Calu3 (cell line): ENCODE measurements at regions of chr4 and their contacts with region 1.

Region 1: DNA sequence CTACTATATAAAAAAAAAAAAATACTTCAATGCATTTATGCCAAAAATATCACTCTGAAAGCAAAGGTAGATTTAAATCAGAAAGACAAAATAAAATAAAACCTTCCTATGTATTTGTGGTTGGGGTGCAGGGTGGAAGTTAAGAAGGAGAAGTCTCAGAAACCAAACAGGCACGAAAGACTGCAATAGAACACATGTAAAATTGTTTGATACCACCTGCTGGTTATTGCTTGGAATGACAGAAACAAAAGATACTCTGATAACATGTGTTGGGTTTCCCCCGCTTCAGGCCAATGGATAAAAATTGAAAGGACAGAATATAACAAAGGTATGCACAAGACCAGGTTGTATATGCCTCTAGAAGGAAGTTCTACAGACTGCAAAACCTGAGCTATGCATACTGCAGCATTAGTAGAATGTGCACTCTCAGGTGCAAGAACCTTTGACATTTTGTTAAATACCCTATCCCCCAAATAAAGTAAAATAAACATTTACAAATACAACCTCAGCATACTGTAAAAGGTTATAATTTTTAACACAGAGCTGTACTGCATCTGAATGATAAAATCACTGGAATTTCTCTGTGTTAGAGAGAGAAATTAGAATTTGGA is 118.8 kb downstream of the GABRA2 start:
- DNase-seq: no peak
- H3K4me3 Mint-ChIP-seq: no peak overlapping the region
- H3K27ac Mint-ChIP-seq: no peak overlapping the region
- H3K4me1 Mint-ChIP-seq: no peaks in the 10 kb centered on the region
- H3K27me3 Mint-ChIP-seq: no peaks in the 10 kb centered on the region
- CTCF ChIP-seq: no peak

Region 2: GRCh38 chr4:44760142-44760898 is 1510.8 kb before region 1 on chr4:
- CTCF ChIA-PET with region 1: no interaction called
- intact Hi-C with region 1: loop called (anchors 2 kb)
- DNase-seq: peak; percentile 9
- H3K4me3 Mint-ChIP-seq: no peak overlapping the region
- H3K27ac Mint-ChIP-seq: no peak overlapping the region
- H3K4me1 Mint-ChIP-seq: no peaks in the 10 kb centered on the region
- H3K27me3 Mint-ChIP-seq: no peaks in the 10 kb centered on the region
- CTCF ChIP-seq: peak; percentile 24

Region 3: GRCh38 chr4:44927399-44928380 is 1343.4 kb before region 1 on chr4:
- CTCF ChIA-PET with region 1: no interaction called
- intact Hi-C with region 1: loop called (anchors 2 kb)
- DNase-seq: peak; percentile 3
- H3K4me3 Mint-ChIP-seq: no peak overlapping the region
- H3K27ac Mint-ChIP-seq: no peak overlapping the region
- H3K4me1 Mint-ChIP-seq: no peaks in the 10 kb centered on the region
- H3K27me3 Mint-ChIP-seq: no peaks in the 10 kb centered on the region
- CTCF ChIP-seq: peak; percentile 13

Region 4: DNA sequence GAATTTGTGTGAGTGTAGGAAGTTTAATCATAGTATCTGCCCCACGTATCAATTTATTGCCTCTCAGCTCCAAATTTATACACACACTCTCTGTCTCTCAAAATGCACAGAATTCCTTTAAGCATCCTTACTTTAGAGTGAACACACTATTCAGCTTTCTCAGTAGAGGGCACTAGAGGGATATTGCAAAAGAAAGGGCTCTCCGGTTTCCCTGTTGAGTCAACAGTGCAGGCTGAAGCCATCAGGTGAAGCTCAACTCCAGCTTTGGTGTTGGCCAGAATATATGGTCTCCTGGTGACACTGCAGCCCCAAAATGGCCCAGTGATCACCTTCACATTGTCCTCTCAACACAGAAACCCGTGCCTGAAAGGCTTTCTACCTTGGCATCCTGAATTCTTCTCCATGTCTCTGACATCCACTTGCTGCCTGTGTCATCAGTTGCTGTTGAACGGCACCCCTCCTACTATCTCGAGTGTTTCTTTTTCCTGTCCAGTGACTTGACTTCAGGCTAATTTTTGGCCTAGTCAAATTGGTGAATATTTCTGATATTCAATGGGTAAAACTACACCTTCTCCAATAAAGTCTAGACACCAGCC is 817.7 kb before region 1 on chr4:
- CTCF ChIA-PET with region 1: no interaction called
- intact Hi-C with region 1: loop called (anchors 1 kb)
- DNase-seq: peak; percentile 7
- H3K4me3 Mint-ChIP-seq: no peak overlapping the region
- H3K27ac Mint-ChIP-seq: no peak overlapping the region
- H3K4me1 Mint-ChIP-seq: no peaks in the 10 kb centered on the region
- H3K27me3 Mint-ChIP-seq: no peaks in the 10 kb centered on the region
- CTCF ChIP-seq: peak; percentile 34

Region 5: DNA sequence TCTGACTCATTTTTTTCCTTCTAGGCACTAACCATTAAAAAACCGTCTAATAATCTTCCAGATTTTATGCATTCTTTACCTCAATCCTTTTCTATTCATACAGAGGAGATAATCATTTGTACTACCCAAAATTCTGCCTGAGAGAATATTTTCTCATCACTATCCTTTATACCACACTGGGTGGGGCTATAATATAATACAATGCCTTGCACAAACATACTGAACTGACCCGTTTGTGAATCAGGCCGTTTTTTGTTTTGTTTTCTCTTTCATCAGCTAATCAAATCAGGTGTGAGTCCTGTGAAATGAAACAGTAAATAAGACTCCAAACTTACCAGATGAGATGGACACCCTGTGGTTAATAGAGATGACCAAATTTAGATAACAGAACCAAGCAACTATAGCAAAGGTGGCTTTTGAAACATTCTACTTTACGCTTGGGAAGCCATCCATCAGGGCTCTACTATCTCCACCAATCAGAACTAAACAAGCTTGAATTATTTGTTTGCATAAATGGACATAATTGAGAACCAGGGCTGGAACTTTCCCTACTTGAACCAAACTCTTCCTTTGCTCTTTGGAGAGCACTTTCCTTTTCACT is 720.2 kb before region 1 on chr4:
- CTCF ChIA-PET with region 1: no interaction called
- intact Hi-C with region 1: loop called (anchors 5 kb)
- DNase-seq: no peak
- H3K4me3 Mint-ChIP-seq: no peak overlapping the region
- H3K27ac Mint-ChIP-seq: no peak overlapping the region
- H3K4me1 Mint-ChIP-seq: no peaks in the 10 kb centered on the region
- H3K27me3 Mint-ChIP-seq: no peaks in the 10 kb centered on the region
- CTCF ChIP-seq: no peak

Region 6: DNA sequence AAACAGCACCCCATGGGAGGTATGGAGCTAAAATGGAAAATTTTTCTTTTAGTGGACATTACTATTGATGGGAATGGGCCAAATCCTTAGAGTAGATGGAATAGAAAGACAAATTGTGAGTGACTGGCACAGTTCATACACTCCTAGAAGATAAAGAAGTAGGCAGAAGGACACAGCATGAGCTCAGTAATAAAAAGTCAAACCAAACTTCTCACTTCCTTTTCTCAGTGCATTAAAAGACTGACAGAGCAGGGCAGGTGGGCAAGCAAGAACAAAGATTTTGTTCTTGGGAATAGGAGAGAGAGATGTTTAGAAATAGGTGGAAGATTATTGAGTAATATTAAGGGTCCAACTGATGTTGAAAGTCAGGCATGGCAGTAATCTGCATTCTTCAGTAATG is 1346.5 kb after region 1 on chr4:
- CTCF ChIA-PET with region 1: no interaction called
- intact Hi-C with region 1: no loop called
- DNase-seq: no peak
- H3K4me3 Mint-ChIP-seq: no peak overlapping the region
- H3K27ac Mint-ChIP-seq: no peak overlapping the region
- H3K4me1 Mint-ChIP-seq: no peaks in the 10 kb centered on the region
- H3K27me3 Mint-ChIP-seq: no peaks in the 10 kb centered on the region
- CTCF ChIP-seq: no peak